ENCODE measurements at regions of chr14 and their contacts with region 1.

Region 1: GRCh38 chr14:39114073-39114838 is at the start of gene GEMIN2:
- DNase-seq: peak; percentile 77 to 93 (median 86)
- ATAC-seq: peak; percentile 96
- H3K4me3 ChIP-seq: peak within 1 kb of the TSS; percentile 66
- H3K27ac ChIP-seq: peak within 1 kb of the TSS; percentile 76
- H3K4me1 ChIP-seq: peaks cover 0 to 4% of the 10 kb centered on the region in 2 experiments; a peak in 2 of 5 replicates
- H3K27me3 ChIP-seq: no peaks in the 10 kb centered on the region
- CTCF ChIP-seq: no peak
- EP300 ChIP-seq: no peak
- POLR2A ChIP-seq: peak; percentile 81
- RAD21 ChIP-seq: no peak
- polyA plus RNA-seq, gene GEMIN2: 54.5 to 60.8 TPM

Region 2: DNA sequence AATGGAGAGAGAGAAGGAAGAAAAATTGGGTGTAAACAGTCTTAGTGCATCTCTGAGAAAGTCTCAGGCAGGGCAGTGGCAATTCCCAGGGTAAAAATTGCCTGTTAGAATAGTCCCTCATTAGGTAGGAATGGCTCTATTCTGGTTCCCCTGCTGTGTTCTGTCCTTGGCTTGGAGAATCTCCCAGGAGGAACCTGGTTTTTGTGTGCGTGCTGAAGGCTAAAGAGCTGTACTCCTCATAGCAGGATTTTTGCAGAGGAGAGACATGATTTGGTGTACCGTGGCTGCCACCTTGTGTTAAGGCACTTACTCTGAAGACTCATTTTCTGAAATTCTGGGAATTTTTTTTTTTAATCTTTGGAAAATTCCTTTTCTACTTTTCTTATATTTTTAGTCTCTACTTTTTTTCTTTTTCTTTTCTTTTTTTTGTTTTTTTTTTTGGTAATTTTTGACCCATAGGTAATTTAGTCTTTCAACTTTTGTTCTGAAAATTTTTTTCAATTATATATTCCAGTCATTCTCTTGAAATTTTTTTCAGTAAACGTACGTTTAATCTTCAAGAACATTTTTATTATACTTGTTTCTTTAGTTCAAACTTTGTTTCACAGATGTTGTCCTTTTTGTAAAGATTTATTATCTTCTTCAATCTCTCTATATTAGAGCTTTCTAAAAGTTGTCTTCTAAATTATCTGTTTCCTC is 254.2 kb after region 1 on chr14:
- CTCF ChIA-PET with region 1: no interaction called
- POLR2A ChIA-PET with region 1: no interaction called
- in situ Hi-C with region 1: loop called (anchors 10 kb)
- intact Hi-C with region 1: loop called (anchors 5 kb)
- DNase-seq: peak in 3 of 4 experiments; percentile 9 to 54 (median 16)
- ATAC-seq: peak; percentile 84
- H3K4me3 ChIP-seq: no peak overlapping the region
- H3K27ac ChIP-seq: no peak overlapping the region
- H3K4me1 ChIP-seq: no peaks in the 10 kb centered on the region; a peak in 1 of 5 replicates
- H3K27me3 ChIP-seq: no peaks in the 10 kb centered on the region
- CTCF ChIP-seq: peak; percentile 47 to 70 (median 52)
- EP300 ChIP-seq: no peak
- POLR2A ChIP-seq: no peak
- RAD21 ChIP-seq: peak; percentile 34 to 63